ENCODE measurements at regions of chr9 and their contacts with region 1.

Region 1: DNA sequence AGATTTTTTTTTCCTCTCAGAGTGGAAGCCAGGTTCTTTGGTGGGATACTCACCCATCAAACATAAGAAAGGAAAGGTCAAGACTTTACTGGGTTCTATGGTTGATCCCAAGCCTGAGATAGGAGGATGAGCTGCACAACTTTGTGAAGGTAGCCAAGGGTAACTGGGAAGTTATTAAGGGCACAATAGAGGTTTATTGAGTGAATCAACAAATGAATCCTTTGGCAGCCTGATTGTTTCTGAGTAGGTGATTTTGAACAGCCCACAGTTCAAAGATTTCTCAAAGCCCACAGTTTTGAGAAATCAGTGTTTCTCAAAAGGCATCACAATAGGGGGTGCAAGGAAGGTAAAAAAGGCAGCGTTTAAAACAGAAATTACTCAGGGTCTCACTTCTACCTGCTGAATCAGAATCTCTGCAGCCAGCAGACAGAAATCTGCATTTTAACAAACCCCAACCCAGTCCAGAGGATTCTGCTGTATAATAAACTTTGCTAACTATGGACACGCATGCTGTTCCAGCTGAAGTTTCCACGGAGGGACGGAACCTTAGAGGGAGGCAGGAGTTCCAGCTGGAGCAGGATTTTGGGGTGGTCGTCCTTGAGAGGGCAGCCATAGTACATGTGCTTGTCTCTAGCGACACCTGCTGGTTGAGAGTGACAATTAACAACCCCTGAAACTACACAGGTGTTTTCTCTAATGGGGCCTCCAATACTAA is 32.7 kb upstream of the FSD1L start:
- DNase-seq: peak; percentile 42 to 87
- ATAC-seq: peak; percentile 77 to 89 (median 81)
- H3K4me3 ChIP-seq: no peak overlapping the region
- H3K4me3 Mint-ChIP-seq: no peak overlapping the region
- H3K27ac ChIP-seq: no peak overlapping the region
- H3K27ac Mint-ChIP-seq: no peak overlapping the region
- H3K4me1 ChIP-seq: no peaks in the 10 kb centered on the region
- H3K4me1 Mint-ChIP-seq: peaks cover 5 to 6% of the 10 kb centered on the region in 2 donors
- H3K27me3 ChIP-seq: peaks cover 3% of the 10 kb centered on the region
- H3K27me3 Mint-ChIP-seq: peaks cover 27 to 42% of the 10 kb centered on the region in 2 donors
- CTCF ChIP-seq: peak; percentile 94

Region 2: DNA sequence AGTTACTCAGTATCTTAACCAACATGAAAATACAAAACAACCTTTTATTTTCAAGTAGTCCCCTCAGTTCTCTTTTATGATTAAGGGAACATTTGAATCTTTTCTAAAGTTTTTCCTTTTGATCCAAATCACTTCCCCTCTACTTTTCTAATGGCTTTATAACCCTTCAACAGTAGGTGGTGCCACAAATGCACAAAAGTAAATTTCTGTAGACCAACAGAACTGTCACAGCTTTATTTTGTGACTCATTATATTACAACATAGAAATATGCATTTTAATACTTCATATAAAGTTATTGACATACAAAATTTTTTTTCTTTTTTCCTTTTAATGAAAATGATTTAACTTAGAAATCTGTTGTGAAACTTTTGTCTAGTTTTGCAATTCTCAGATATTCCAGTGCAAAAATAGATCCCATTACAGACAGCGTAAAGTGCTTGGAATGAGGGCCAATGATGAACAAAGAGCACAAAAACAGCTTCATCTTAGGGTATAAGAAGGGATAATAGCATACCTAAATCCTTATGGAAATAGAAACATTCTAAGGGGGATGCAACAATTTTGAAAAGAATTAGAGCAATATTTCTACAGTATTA is 634.2 kb before region 1 on chr9:
- intact Hi-C with region 1: loop called (anchors 2 kb)
- DNase-seq: peak in 1 of 2 donors; percentile 23
- ATAC-seq: peak in 1 of 3 donors; percentile 41
- H3K4me3 ChIP-seq: no peak overlapping the region
- H3K4me3 Mint-ChIP-seq: no peak overlapping the region
- H3K27ac ChIP-seq: no peak overlapping the region
- H3K27ac Mint-ChIP-seq: no peak overlapping the region
- H3K4me1 ChIP-seq: no peaks in the 10 kb centered on the region
- H3K4me1 Mint-ChIP-seq: peaks cover 0 to 5% of the 10 kb centered on the region in 2 donors
- H3K27me3 ChIP-seq: no peaks in the 10 kb centered on the region
- H3K27me3 Mint-ChIP-seq: peaks cover 0 to 7% of the 10 kb centered on the region in 2 donors
- CTCF ChIP-seq: no peak

Region 3: DNA sequence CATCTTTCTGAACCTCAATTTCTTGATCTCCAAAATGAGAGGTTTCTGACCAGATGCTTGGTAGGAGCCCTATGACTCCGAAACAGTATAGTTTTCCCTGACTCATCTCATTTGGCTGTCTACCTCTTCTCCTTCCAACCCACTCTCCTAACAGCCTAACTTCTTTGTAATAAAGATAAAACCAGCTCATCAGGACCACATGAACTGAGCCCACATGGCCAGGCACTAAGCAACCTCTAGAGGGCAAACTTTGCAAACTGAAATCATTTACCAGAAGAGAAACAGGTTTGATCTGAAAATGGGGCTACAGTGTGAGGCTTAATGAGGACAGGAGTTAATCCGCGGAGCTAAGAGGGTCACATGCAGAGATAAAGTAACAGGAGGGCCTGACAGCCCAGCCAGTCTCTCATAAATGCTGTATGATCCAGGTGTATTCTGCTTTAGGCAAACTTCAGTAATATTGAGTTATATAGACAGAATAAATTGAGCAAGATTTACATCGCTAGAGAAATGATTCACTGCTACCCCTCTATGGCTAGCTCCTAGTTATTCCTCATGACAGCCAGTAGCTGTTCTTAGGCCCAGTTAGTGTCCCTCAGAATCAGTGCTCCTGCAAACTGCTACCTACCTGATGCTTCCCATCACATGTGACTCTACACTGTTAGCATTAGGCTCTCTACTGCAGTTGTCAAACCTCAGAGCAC is 551.8 kb before region 1 on chr9:
- intact Hi-C with region 1: loop called (anchors 1 kb)
- DNase-seq: peak; percentile 20 to 76
- ATAC-seq: peak; percentile 68 to 82 (median 76)
- H3K4me3 ChIP-seq: no peak overlapping the region
- H3K4me3 Mint-ChIP-seq: no peak overlapping the region
- H3K27ac ChIP-seq: no peak overlapping the region
- H3K27ac Mint-ChIP-seq: no peak overlapping the region
- H3K4me1 ChIP-seq: peaks cover 3% of the 10 kb centered on the region
- H3K4me1 Mint-ChIP-seq: no peaks in the 10 kb centered on the region
- H3K27me3 ChIP-seq: no peaks in the 10 kb centered on the region
- H3K27me3 Mint-ChIP-seq: peaks cover 0 to 3% of the 10 kb centered on the region in 2 donors
- CTCF ChIP-seq: peak; percentile 69

Region 4: GRCh38 chr9:105157130-105157583 is 257.9 kb before region 1 on chr9:
- intact Hi-C with region 1: loop called (anchors 1 kb)
- DNase-seq: peak; percentile 15 to 63
- ATAC-seq: peak; percentile 46 to 76 (median 67)
- H3K4me3 ChIP-seq: no peak overlapping the region
- H3K4me3 Mint-ChIP-seq: no peak overlapping the region
- H3K27ac ChIP-seq: no peak overlapping the region
- H3K27ac Mint-ChIP-seq: no peak overlapping the region
- H3K4me1 ChIP-seq: no peaks in the 10 kb centered on the region
- H3K4me1 Mint-ChIP-seq: peaks cover 0 to under 1% of the 10 kb centered on the region in 2 donors
- H3K27me3 ChIP-seq: no peaks in the 10 kb centered on the region
- H3K27me3 Mint-ChIP-seq: peaks cover 6% of the 10 kb centered on the region in 2 donors
- CTCF ChIP-seq: peak; percentile 45